Cardiac septum (tissue), 1 donor: ENCODE measurements at regions of chr22 and their contacts with region 1.

Region 1: GRCh38 chr22:42868751-42869251 is 11.7 kb upstream of the ARFGAP3 start:
- DNase-seq: peak; percentile 89

Region 2: DNA sequence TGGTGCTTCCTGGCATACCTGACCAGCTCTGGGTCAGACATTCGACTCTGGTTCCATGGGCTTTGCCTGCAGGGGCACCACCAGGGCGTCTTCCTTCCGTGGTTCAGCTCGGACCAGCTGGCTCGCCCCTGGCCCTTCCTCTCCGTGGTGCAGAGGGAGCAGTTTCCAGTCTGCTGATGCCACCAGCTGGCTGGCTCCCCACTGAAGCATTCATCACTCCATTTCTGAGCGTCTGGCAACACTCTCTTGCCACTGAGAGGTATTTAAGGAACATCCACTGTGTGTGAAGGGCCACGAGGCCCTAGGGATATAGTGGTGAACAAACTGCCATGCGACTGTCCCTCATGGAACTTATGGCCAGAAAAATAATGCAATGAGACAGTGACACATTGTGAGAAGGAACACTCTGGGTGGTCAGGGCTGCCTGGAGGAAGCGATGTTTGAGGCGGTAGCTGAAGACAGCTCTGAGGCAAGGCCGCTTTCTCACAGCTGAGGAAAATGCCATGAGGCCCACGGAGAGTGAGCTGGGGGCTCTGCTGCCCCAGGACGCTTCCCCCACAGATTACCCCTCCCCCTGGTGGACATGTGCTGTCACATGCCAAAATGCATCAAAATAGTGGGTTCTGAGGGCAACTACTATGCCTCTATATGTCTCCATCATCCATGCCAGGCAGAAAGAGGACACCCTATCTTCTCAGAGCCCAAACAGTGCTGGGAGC is 33.1 kb after region 1 on chr22:
- intact Hi-C with region 1: loop called (anchors 5 kb)
- DNase-seq: no peak

Region 3: DNA sequence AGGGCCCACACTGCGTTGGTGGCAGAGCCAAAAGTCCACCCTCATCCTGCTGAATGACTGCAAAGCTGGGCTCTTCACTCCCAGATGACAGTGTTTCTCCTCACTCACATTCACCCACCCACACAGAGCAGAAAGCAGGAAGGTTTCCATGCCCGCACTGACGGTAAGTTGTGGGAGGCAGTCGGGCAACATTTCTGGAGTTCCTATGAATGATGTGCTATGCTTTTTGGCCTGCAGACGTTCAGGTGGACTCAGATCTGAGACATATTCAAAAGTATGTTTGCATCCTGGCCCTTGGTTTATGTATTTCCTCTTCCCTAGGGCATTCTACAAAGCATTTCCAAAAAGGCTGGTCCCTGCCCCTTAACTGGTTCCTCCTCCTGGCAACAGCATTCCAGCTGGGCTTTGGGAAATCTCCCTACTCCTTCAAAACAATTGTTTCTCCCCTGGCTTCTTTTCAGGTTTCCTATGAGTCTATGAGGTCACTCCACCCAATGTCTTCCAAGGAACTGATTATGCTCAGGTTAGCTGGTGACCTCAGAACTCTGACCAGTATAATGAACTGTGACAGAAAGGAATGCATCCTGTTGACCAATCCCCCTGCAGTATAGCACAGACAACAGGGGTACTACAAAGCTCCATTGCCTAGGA is 109.8 kb after region 1 on chr22:
- intact Hi-C with region 1: loop called (anchors 5 kb)
- DNase-seq: no peak

Region 4: GRCh38 chr22:43031617-43032016 is 162.8 kb after region 1 on chr22:
- intact Hi-C with region 1: loop called (anchors 5 kb)
- DNase-seq: no peak

Region 5: GRCh38 chr22:43090130-43090789 is 221.5 kb after region 1 on chr22:
- intact Hi-C with region 1: loop called (anchors 5 kb)
- DNase-seq: no peak